Activated CD8-positive, alpha-beta T cell treated with anti-CD3 and anti-CD28 coated beads for 36 hours (primary cell): ENCODE measurements at regions of chr7 and their contacts with region 1.

Region 1: GRCh38 chr7:50092579-50093491 is at the start of gene ZPBP:
- DNase-seq: peak; percentile 71
- ATAC-seq: peak; percentile 81
- H3K4me3 Mint-ChIP-seq: peak within 1 kb of the TSS; percentile 84
- H3K27ac Mint-ChIP-seq: peak within 1 kb of the TSS; percentile 93
- H3K4me1 Mint-ChIP-seq: peaks cover 19% of the 10 kb centered on the region
- H3K27me3 Mint-ChIP-seq: no peaks in the 10 kb centered on the region
- CTCF ChIP-seq: peak; percentile 98
- total RNA-seq, gene ZPBP: 0.36 TPM in 1 of 2 experiments, not detected in the other

Region 2: DNA sequence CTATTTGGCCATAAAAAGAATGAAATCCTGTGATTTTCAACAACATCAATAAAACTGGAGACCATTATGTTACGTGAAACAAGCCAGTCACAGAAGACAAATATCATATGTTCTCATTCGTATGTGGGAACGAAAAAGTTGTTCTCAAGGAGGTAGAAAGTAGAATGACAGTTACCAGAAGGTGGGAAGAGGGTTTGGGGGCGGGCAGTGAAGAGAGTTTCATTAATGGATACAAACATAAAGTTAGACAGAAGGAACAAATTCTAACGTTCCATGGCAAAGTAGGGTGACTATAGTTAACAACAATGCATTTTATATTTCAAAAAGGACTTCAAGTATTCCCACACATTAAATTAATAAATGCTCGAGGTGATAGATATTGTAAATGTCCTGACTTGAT is 97.2 kb before region 1 on chr7:
- CTCF ChIA-PET with region 1: no interaction called
- POLR2A ChIA-PET with region 1: no interaction called
- intact Hi-C with region 1: no loop called
- DNase-seq: no peak
- ATAC-seq: no peak
- H3K4me3 Mint-ChIP-seq: no peak overlapping the region
- H3K27ac Mint-ChIP-seq: no peak overlapping the region
- H3K4me1 Mint-ChIP-seq: no peaks in the 10 kb centered on the region
- H3K27me3 Mint-ChIP-seq: no peaks in the 10 kb centered on the region
- CTCF ChIP-seq: no peak

Region 3: DNA sequence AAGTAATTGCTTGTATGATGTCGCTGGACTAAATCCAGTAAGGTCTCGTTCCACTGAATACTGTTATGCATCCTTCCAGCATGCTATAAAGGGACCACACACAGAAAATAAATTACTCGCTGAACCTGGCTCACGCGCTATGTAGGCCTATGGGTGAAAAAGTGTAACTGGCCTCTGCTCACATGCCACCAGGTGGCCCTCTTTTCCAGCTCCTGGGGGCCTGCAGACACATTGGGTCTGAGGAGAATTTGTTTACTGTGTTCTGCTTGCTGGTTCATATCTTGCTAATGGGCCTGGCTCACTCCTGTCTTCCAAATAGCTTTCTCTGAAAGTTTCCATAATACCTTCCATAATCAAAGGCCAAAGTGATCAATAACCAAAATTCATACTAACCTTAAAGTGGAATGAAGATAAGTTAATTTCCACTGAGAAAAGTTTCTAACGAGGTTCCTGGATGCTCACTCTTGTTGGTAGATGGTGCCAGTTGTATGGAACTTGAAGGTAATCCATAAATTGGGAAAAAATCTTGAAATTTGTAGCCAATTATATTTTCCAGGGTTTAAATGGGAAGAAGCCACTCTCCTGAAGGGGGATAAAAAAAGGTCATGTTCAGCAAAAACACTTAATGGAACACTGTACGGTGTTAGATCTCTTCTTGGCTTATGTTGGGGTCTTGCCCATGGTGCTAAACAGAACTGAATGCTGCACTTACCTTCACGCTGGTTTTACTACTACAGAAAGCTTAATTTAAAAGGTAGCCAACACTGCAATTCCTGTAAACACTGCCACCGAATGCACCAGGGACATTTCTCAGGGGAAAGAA is 27.2 kb after region 1 on chr7:
- CTCF ChIA-PET with region 1: interaction called, 25 read pairs
- POLR2A ChIA-PET with region 1: interaction called, 3 read pairs
- intact Hi-C with region 1: no loop called
- DNase-seq: peak; percentile 64
- ATAC-seq: peak; percentile 81
- H3K4me3 Mint-ChIP-seq: no peak overlapping the region
- H3K27ac Mint-ChIP-seq: no peak overlapping the region
- H3K4me1 Mint-ChIP-seq: no peaks in the 10 kb centered on the region
- H3K27me3 Mint-ChIP-seq: peaks cover 2% of the 10 kb centered on the region
- CTCF ChIP-seq: peak; percentile 64

Region 4: DNA sequence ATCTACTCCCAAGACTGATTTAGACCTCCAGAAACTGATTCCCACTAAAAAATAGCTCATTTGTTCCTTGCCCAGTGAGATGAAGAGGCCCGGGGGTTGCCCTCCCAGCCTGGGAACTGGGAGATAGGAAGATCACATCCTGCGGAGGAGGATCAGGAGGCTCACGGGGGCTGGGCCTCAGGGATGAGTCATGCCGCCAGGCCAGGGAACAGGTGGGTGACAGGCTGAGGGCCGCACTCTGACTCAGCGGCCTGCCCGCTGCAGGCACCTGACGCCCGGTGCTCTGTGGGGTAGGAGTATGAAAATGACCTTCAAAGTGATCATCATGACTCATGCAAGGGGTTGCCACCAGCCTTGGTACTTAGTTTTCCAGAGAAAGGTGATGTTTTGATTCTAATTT is 104.7 kb after region 1 on chr7:
- CTCF ChIA-PET with region 1: interaction called, 11 read pairs
- POLR2A ChIA-PET with region 1: no interaction called
- intact Hi-C with region 1: no loop called
- DNase-seq: peak; percentile 89
- ATAC-seq: peak; percentile 97
- H3K4me3 Mint-ChIP-seq: no peak overlapping the region
- H3K27ac Mint-ChIP-seq: peak overlapping the region; percentile 76
- H3K4me1 Mint-ChIP-seq: peaks cover 49% of the 10 kb centered on the region
- H3K27me3 Mint-ChIP-seq: no peaks in the 10 kb centered on the region
- CTCF ChIP-seq: no peak

Region 5: GRCh38 chr7:50679218-50680007 is 586.6 kb after region 1 on chr7:
- CTCF ChIA-PET with region 1: interaction called, 12 read pairs
- POLR2A ChIA-PET with region 1: no interaction called
- intact Hi-C with region 1: loop called (anchors 10 kb)
- DNase-seq: no peak
- ATAC-seq: peak; percentile 61
- H3K4me3 Mint-ChIP-seq: no peak overlapping the region
- H3K27ac Mint-ChIP-seq: no peak overlapping the region
- H3K4me1 Mint-ChIP-seq: peaks cover 2% of the 10 kb centered on the region
- H3K27me3 Mint-ChIP-seq: peaks cover 4% of the 10 kb centered on the region
- CTCF ChIP-seq: peak; percentile 43